Common myeloid progenitor, CD34-positive (primary cell): ENCODE measurements at regions of chr14 and their contacts with region 1.

Region 1: GRCh38 chr14:23281247-23281646 is 4.7 kb downstream of the HOMEZ start:
- DNase-seq: no peak
- H3K4me3 ChIP-seq: no peak overlapping the region
- H3K27ac ChIP-seq: no peak overlapping the region
- H3K4me1 ChIP-seq: peaks cover 5 to 15% (median 8%) of the 10 kb centered on the region in 4 experiments
- H3K27me3 ChIP-seq: no peaks in the 10 kb centered on the region

Region 2: DNA sequence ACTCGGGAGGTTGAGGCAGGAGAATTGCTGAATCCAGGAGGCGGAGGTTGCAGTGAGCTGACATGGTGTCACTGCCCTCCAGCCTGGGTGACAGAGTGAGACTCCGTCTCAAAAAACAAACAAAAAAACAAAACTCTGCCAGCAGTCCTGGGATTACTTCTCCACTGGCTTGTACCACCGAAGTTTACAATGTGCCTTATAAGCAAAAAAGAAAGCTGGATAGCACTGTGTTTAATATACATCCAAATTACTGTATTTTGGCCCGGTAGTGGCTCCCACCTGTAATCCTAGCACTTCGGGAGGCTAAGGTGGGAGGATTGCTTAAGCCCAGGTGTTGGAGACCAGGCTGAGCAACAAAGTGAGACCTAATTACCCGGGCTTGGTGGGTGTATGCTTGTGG is 12.1 kb before region 1 on chr14:
- CTCF ChIA-PET with region 1: interaction called, 12 read pairs
- POLR2A ChIA-PET with region 1: interaction called, 3 read pairs
- DNase-seq: no peak
- H3K4me3 ChIP-seq: no peak overlapping the region
- H3K27ac ChIP-seq: no peak overlapping the region
- H3K4me1 ChIP-seq: no peaks in the 10 kb centered on the region
- H3K27me3 ChIP-seq: peaks cover 0 to 3% (median 0%) of the 10 kb centered on the region in 5 experiments